Naive thymus-derived CD4-positive, alpha-beta T cell (primary cell): ENCODE measurements at regions of chr17 and their contacts with region 1.

Region 1: GRCh38 chr17:29710891-29711418 is 88.2 kb upstream of the CORO6 start:
- DNase-seq: no peak
- ATAC-seq: no peak
- H3K4me3 ChIP-seq: no peak overlapping the region
- H3K4me3 Mint-ChIP-seq: peak overlapping the region in 1 of 10 donors; percentile 24
- H3K27ac ChIP-seq: no peak overlapping the region
- H3K27ac Mint-ChIP-seq: peak overlapping the region in 8 of 9 donors; percentile 69 to 96 (median 86)
- H3K4me1 ChIP-seq: peaks cover 29 to 30% of the 10 kb centered on the region in 2 donors
- H3K4me1 Mint-ChIP-seq: peaks cover 37 to 92% (median 75%) of the 10 kb centered on the region in 7 donors
- H3K27me3 ChIP-seq: no peaks in the 10 kb centered on the region
- H3K27me3 Mint-ChIP-seq: no peaks in the 10 kb centered on the region

Region 2: GRCh38 chr17:29740017-29740416 is 29.1 kb after region 1 on chr17:
- CTCF ChIA-PET with region 1: interaction called, 3 read pairs
- POLR2A ChIA-PET with region 1: interaction called, 3 read pairs
- intact Hi-C with region 1: loop called in 1 of 2 experiments (anchors 5 kb)
- DNase-seq: peak in 4 of 9 donors; percentile 18 to 28 (median 20)
- ATAC-seq: no peak
- H3K4me3 ChIP-seq: no peak overlapping the region
- H3K4me3 Mint-ChIP-seq: peak overlapping the region in 7 of 10 donors; percentile 8 to 68 (median 56)
- H3K27ac ChIP-seq: peak overlapping the region; percentile 33
- H3K27ac Mint-ChIP-seq: peak overlapping the region in 8 of 9 donors; percentile 55 to 91 (median 70)
- H3K4me1 ChIP-seq: peaks cover 12 to 34% of the 10 kb centered on the region in 2 donors
- H3K4me1 Mint-ChIP-seq: peaks cover 31 to 76% (median 58%) of the 10 kb centered on the region in 7 donors
- H3K27me3 ChIP-seq: no peaks in the 10 kb centered on the region
- H3K27me3 Mint-ChIP-seq: no peaks in the 10 kb centered on the region

Region 3: DNA sequence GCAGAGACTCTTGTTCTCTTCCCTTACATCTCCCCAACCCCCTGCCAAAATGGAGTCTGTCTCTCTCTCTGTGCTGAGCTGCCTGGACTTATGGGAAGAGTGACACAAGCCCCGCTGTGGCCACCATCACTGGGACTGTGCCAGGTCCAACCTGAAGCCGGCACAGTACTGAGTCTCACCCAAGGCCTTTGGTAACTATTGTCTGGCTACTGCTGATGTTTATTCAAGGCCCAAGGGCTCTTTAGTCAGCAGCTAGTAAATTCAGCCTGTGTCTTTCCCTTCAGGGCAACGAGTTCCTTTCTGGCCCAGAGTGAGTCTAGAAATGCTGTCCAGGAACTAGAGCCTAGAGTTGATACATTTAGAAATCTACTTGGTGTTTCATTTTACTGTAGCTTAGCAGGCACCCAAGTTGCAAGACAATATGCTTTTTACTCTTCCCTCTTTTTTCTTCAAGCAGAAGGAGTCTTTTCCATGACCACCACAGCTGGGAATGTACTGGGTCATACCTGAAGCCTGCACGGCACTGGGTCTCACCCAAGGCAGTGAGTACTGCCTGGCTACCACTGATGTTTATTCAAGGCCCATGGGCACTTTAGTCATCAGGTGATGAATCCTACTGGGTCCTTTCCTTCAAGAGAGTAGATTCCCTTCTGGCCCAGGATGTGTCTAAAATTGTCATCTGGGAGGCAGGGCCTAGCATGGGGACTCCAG is 248.1 kb after region 1 on chr17:
- CTCF ChIA-PET with region 1: no interaction called
- POLR2A ChIA-PET with region 1: no interaction called
- intact Hi-C with region 1: no loop called
- DNase-seq: no peak
- ATAC-seq: no peak
- H3K4me3 ChIP-seq: no peak overlapping the region
- H3K4me3 Mint-ChIP-seq: no peak overlapping the region
- H3K27ac ChIP-seq: no peak overlapping the region
- H3K27ac Mint-ChIP-seq: no peak overlapping the region
- H3K4me1 ChIP-seq: no peaks in the 10 kb centered on the region
- H3K4me1 Mint-ChIP-seq: no peaks in the 10 kb centered on the region
- H3K27me3 ChIP-seq: no peaks in the 10 kb centered on the region
- H3K27me3 Mint-ChIP-seq: peaks cover 0 to 13% (median 0%) of the 10 kb centered on the region in 5 donors